ENCODE measurements at regions of chr22 and their contacts with region 1.

Region 1: DNA sequence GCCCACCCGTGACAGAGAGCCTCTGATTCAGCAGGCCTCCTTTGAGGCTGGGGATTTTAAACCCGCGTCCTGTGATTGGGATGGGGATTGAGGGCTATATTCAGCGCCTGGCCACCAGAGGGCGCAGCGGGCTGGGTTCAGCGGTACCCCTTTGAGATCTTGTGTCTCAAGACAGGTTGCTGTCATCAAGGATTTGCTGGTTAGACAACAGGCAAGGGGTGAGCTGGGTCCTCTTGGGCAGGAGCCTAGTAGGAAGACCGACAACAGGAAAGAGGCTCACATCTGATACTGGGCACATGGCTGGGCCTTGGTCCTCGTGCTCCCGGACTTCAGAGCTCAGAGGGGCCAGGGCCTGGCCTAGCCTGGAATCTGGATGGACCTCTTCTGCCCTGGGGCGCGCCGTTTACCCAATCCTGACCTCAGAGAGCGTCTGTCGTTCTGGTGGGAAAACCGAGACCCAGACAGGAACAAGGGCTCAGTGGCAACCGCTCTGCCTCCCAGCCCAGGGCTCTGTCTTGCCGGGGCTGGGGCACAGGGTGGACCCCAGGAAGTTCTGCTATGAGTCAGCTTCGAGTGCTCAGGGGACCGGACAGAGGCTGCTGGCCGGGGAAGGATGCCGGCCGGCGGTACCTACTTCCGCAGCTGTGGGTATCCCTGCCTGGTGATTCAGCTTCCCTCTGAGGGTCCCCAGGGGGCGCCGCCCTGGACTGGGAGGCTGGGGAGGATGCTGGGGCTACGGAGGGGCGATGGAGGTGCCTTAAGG is 929 bp upstream of the SLC35E4 start:
- DNase-seq: peak; percentile 83
- ATAC-seq: peak; percentile 57
- H3K4me3 Mint-ChIP-seq: peak overlapping the region; percentile 83
- H3K27ac Mint-ChIP-seq: peak overlapping the region; percentile 88
- H3K4me1 Mint-ChIP-seq: peaks cover 20% of the 10 kb centered on the region
- H3K27me3 Mint-ChIP-seq: no peaks in the 10 kb centered on the region
- CTCF ChIP-seq: no peak

Region 2: GRCh38 chr22:29387921-29388758 is 1246.5 kb before region 1 on chr22 and contains the start of gene AP1B1:
- CTCF ChIA-PET with region 1: no interaction called
- POLR2A ChIA-PET with region 1: no interaction called
- intact Hi-C with region 1: loop called (anchors 5 kb)
- DNase-seq: peak; percentile 92
- ATAC-seq: peak; percentile 80
- H3K4me3 Mint-ChIP-seq: peak within 1 kb of the TSS; percentile 93
- H3K27ac Mint-ChIP-seq: peak within 1 kb of the TSS; percentile 93
- H3K4me1 Mint-ChIP-seq: peaks cover 61% of the 10 kb centered on the region
- H3K27me3 Mint-ChIP-seq: no peaks in the 10 kb centered on the region
- CTCF ChIP-seq: no peak
- total RNA-seq, gene AP1B1: 120 and 132 TPM in 2 replicates

Region 3: GRCh38 chr22:30614268-30614667 is 20.4 kb before region 1 on chr22:
- CTCF ChIA-PET with region 1: no interaction called
- POLR2A ChIA-PET with region 1: no interaction called
- intact Hi-C with region 1: no loop called
- DNase-seq: no peak
- ATAC-seq: no peak
- H3K4me3 Mint-ChIP-seq: no peak overlapping the region
- H3K27ac Mint-ChIP-seq: no peak overlapping the region
- H3K4me1 Mint-ChIP-seq: peaks cover 2% of the 10 kb centered on the region
- H3K27me3 Mint-ChIP-seq: peaks cover 12% of the 10 kb centered on the region
- CTCF ChIP-seq: no peak

Region 4: GRCh38 chr22:30649430-30650007 is 14.9 kb after region 1 on chr22:
- CTCF ChIA-PET with region 1: interaction called, 11 read pairs
- POLR2A ChIA-PET with region 1: interaction called, 23 read pairs
- intact Hi-C with region 1: loop called (anchors 1 kb)
- DNase-seq: peak; percentile 45
- ATAC-seq: peak; percentile 99
- H3K4me3 Mint-ChIP-seq: no peak overlapping the region
- H3K27ac Mint-ChIP-seq: peak overlapping the region; percentile 66
- H3K4me1 Mint-ChIP-seq: peaks cover 12% of the 10 kb centered on the region
- H3K27me3 Mint-ChIP-seq: no peaks in the 10 kb centered on the region
- CTCF ChIP-seq: no peak

Region 5: DNA sequence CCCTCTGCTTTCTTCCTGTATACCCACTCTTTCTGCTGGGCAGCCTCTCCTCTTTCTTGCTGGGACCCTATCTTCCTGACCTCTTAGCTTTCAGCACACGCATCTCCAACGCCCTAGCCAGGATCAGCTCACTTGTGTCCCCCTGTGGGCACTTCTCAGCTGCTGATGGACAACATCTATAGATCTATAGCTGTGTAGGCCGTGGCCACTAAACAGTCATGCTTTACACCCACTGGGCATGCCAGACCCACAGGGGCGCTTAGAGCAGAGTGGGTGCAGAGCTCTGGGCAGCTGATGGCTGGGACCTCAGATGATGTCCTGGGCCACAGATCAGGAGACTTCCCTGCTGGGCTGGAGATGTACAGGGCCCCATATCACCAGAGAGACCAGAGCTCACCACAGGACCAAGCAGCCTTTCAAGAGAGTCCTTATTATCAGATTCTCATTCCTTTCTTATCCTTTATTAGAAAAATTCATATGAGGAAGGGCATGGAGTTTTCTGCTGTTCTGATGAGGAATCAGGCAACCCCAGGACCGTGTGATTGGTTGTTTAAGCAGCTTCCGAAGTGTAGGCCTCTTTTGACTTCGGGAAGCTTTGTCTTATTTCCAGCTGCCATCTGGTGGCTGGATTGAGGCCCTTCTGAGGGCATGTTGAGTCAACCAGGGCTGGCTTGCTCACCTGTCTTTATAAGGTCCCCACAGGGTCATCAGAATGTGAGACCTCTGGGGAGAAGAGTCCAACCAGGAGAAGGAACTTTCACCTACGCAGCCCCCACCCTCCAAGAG is 120.5 kb after region 1 on chr22:
- CTCF ChIA-PET with region 1: interaction called, 47 read pairs
- POLR2A ChIA-PET with region 1: interaction called, 5 read pairs
- intact Hi-C with region 1: no loop called
- DNase-seq: no peak
- ATAC-seq: peak; percentile 56
- H3K4me3 Mint-ChIP-seq: no peak overlapping the region
- H3K27ac Mint-ChIP-seq: no peak overlapping the region
- H3K4me1 Mint-ChIP-seq: no peaks in the 10 kb centered on the region
- H3K27me3 Mint-ChIP-seq: peaks cover 1% of the 10 kb centered on the region
- CTCF ChIP-seq: no peak

Region 6: GRCh38 chr22:30968924-30969539 is 334.4 kb after region 1 on chr22 and contains the start of gene TUG1:
- CTCF ChIA-PET with region 1: interaction called, 5 read pairs
- POLR2A ChIA-PET with region 1: interaction called, 12 read pairs
- intact Hi-C with region 1: loop called (anchors 1 kb)
- DNase-seq: peak; percentile 93
- ATAC-seq: peak; percentile 92
- H3K4me3 Mint-ChIP-seq: peak within 1 kb of the TSS; percentile 95
- H3K27ac Mint-ChIP-seq: peak within 1 kb of the TSS; percentile 94
- H3K4me1 Mint-ChIP-seq: peaks cover 56% of the 10 kb centered on the region
- H3K27me3 Mint-ChIP-seq: no peaks in the 10 kb centered on the region
- CTCF ChIP-seq: no peak
- total RNA-seq, gene TUG1: 70.4 and 83.0 TPM in 2 replicates

Region 7: DNA sequence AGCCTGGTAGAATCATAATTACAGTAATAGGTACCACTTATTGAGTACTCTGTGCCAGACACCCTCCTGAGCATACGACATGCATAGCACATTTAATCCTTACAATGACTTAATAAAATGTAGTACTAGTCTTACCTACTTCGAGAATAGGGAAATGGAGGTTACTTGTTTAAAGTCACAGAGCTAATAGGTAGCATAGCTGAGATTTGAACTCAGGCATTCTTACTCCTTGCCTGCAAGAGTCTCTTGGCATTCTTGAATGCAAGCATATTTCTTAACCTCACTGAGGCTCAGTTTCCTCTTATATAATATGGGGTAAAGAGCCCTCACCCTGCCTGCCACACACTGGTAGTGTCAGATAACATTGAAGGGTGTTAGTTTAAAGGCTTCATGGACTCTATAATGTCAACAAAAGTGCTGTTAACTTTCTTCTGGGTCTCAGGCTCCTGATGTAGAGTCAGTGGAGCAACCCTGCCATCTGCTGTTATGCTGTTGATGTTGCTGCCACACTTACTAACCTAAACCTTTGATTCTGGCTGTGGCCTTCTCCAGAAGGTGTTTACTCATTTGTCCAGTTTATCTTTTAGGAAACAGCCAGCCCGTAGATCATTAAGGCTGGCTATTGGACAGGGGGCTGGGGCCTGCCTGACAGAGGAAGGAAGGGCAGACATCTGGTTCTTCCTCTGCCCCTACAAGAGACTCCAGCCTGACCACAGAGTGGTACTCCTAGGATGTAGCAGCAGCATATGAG is 596.4 kb after region 1 on chr22:
- CTCF ChIA-PET with region 1: no interaction called
- POLR2A ChIA-PET with region 1: no interaction called
- intact Hi-C with region 1: loop called (anchors 5 kb)
- DNase-seq: no peak
- ATAC-seq: peak; percentile 52
- H3K4me3 Mint-ChIP-seq: no peak overlapping the region
- H3K27ac Mint-ChIP-seq: no peak overlapping the region
- H3K4me1 Mint-ChIP-seq: peaks cover 23% of the 10 kb centered on the region
- H3K27me3 Mint-ChIP-seq: no peaks in the 10 kb centered on the region
- CTCF ChIP-seq: no peak